HCT116 (cell line): ENCODE measurements at regions of chr1 and their contacts with region 1.

Region 1: DNA sequence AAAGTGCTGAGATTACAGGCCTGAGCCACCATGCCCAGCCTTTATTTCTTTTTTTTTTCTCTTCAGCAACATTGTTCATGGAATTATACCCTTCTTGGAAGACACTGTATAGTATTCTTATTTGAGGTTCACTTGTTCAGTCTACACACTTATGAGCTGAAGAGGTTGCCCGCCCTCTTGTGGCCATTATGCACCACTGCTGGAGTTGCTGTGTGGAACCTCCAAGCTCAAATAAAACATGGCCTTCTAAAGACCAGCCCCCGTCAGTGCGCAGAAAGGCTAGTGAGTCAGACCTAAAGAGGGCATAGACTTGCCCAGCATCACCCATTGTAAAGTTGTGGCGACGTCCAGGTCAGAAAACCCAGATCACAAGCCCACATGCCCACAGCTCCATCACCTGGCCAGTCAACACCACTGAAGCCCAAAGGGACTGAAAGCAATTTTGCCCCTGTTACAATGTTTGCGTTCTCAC is 20.4 kb downstream of the LURAP1 start:
- DNase-seq: peak; percentile 87
- ATAC-seq: peak; percentile 95
- H3K4me3 ChIP-seq: no peak overlapping the region; a peak in 1 of 4 replicates
- H3K27ac ChIP-seq: peak overlapping the region; percentile 6; the same call in 1 of the 2 replicates
- H3K4me1 ChIP-seq: peaks cover 3 to 27% of the 10 kb centered on the region in 2 experiments; a peak in 3 of 4 replicates
- H3K27me3 ChIP-seq: no peaks in the 10 kb centered on the region
- CTCF ChIP-seq: peak; percentile 92 to 99 (median 98)
- POLR2A ChIP-seq: no peak
- RAD21 ChIP-seq: peak; percentile 98

Region 2: DNA sequence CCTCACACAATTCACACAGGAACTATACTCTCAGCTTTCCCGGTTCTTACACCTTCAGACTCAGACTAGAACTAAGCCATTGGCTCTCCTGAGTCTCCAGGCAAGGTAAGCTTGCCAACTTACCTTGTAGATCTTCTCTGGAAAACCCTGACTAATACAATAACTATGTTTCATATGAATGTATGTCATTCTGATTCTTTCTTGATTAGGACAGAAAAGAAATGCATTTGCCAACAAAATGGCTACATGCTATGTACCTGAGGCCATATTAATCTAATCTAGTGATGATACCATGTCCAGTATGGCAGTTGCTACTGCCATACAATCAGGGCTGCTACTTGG is 1007.3 kb before region 1 on chr1:
- CTCF ChIA-PET with region 1: no interaction called
- POLR2A ChIA-PET with region 1: no interaction called
- RAD21 ChIA-PET with region 1: no interaction called
- intact Hi-C with region 1: no loop called
- DNase-seq: no peak
- ATAC-seq: no peak
- H3K4me3 ChIP-seq: no peak overlapping the region
- H3K27ac ChIP-seq: no peak overlapping the region
- H3K4me1 ChIP-seq: no peaks in the 10 kb centered on the region
- H3K27me3 ChIP-seq: no peaks in the 10 kb centered on the region
- CTCF ChIP-seq: no peak
- POLR2A ChIP-seq: no peak
- RAD21 ChIP-seq: no peak

Region 3: GRCh38 chr1:46026531-46026930 is 197.0 kb before region 1 on chr1:
- CTCF ChIA-PET with region 1: no interaction called
- POLR2A ChIA-PET with region 1: no interaction called
- RAD21 ChIA-PET with region 1: no interaction called
- intact Hi-C with region 1: no loop called
- DNase-seq: no peak
- ATAC-seq: no peak
- H3K4me3 ChIP-seq: no peak overlapping the region
- H3K27ac ChIP-seq: no peak overlapping the region
- H3K4me1 ChIP-seq: no peaks in the 10 kb centered on the region
- H3K27me3 ChIP-seq: no peaks in the 10 kb centered on the region
- CTCF ChIP-seq: no peak
- POLR2A ChIP-seq: no peak
- RAD21 ChIP-seq: no peak

Region 4: GRCh38 chr1:46036894-46037839 is 186.3 kb before region 1 on chr1:
- CTCF ChIA-PET with region 1: interaction called, 36 read pairs
- POLR2A ChIA-PET with region 1: interaction called, 3 read pairs
- RAD21 ChIA-PET with region 1: interaction called in 1 of 2 experiments, 3 read pairs
- intact Hi-C with region 1: loop called (anchors 1 kb)
- DNase-seq: peak; percentile 63
- ATAC-seq: peak; percentile 85
- H3K4me3 ChIP-seq: no peak overlapping the region
- H3K27ac ChIP-seq: no peak overlapping the region
- H3K4me1 ChIP-seq: peaks cover 7 to 11% of the 10 kb centered on the region in 2 experiments; a peak in 3 of 4 replicates
- H3K27me3 ChIP-seq: no peaks in the 10 kb centered on the region
- CTCF ChIP-seq: peak; percentile 96 to 98 (median 96)
- POLR2A ChIP-seq: no peak
- RAD21 ChIP-seq: peak; percentile 100

Region 5: GRCh38 chr1:46043458-46044017 is 180.0 kb before region 1 on chr1:
- CTCF ChIA-PET with region 1: interaction called, 10 read pairs
- POLR2A ChIA-PET with region 1: interaction called, 3 read pairs
- RAD21 ChIA-PET with region 1: interaction called in 1 of 2 experiments, 3 read pairs
- intact Hi-C with region 1: no loop called
- DNase-seq: no peak
- ATAC-seq: no peak
- H3K4me3 ChIP-seq: no peak overlapping the region
- H3K27ac ChIP-seq: no peak overlapping the region
- H3K4me1 ChIP-seq: peaks cover 7 to 11% of the 10 kb centered on the region in 2 experiments; a peak in 3 of 4 replicates
- H3K27me3 ChIP-seq: no peaks in the 10 kb centered on the region
- CTCF ChIP-seq: no peak
- POLR2A ChIP-seq: no peak
- RAD21 ChIP-seq: no peak

Region 6: DNA sequence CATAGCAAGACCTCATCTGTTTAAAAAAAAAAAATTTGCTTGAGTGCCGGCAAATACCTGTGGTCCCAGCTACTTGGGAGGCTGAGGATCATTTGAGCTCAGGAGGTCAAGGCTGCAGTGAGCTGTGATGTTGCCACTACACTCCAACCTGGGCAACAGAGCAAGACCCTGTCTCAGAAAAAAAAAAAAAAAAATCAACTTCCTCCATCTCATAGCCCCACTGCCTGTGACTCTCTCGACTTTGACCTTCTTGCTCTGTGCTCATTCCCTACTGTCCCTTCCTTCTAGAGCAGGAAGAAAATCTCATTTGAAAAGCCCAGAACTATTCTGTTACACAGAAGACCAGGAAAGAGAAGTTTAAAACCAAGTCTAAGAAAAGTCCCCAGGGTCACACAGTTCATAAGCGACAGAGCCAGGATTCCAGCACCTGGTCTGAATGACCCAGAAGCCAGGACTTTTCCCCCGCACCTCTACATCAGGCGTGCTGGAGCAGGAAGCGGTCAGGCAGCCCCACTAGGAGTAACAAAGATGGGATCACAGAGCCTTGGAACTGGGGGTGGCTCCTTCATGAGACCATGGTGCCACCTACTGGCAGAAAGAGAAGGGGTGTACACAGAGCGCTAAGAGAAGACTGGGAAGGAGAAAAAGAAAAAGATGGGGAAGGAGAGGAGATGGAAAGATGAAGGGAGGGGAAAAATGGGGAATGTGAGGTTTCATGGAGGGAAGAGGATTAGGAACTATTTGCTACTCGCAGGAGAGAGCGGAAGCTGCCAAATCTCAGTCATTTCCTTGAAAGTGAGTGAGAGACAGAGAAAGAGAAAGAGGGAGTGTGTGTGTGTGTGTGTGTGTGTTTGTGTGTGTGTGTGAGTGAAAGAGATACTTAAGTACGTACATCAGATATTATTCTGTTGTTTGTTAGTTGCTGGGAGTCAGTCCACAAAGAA is 44.1 kb before region 1 on chr1:
- CTCF ChIA-PET with region 1: interaction called, 94 read pairs
- POLR2A ChIA-PET with region 1: interaction called, 17 read pairs
- RAD21 ChIA-PET with region 1: interaction called, 12 to 28 read pairs
- intact Hi-C with region 1: loop called (anchors 1 kb)
- DNase-seq: peak; percentile 80
- ATAC-seq: peak; percentile 69
- H3K4me3 ChIP-seq: peak overlapping the region; percentile 5; a peak in 1 of 4 replicates
- H3K27ac ChIP-seq: no peak overlapping the region; the same call in 1 of the 2 replicates
- H3K4me1 ChIP-seq: peaks cover 55 to 63% of the 10 kb centered on the region in 2 experiments
- H3K27me3 ChIP-seq: no peaks in the 10 kb centered on the region
- CTCF ChIP-seq: peak in 2 of 3 experiments; percentile 96 to 98; a peak in 4 of 6 replicates
- POLR2A ChIP-seq: no peak
- RAD21 ChIP-seq: no peak

Region 7: GRCh38 chr1:46203738-46204405 is 19.6 kb before region 1 on chr1:
- CTCF ChIA-PET with region 1: interaction called, 10 read pairs
- POLR2A ChIA-PET with region 1: interaction called, 7 read pairs
- RAD21 ChIA-PET with region 1: no interaction called
- intact Hi-C with region 1: no loop called
- DNase-seq: no peak
- ATAC-seq: no peak
- H3K4me3 ChIP-seq: no peak overlapping the region
- H3K27ac ChIP-seq: no peak overlapping the region
- H3K4me1 ChIP-seq: peaks cover 3 to 16% of the 10 kb centered on the region in 2 experiments; a peak in 3 of 4 replicates
- H3K27me3 ChIP-seq: no peaks in the 10 kb centered on the region
- CTCF ChIP-seq: no peak
- POLR2A ChIP-seq: no peak
- RAD21 ChIP-seq: no peak

Region 8: GRCh38 chr1:46236882-46237281 is 13.4 kb after region 1 on chr1:
- CTCF ChIA-PET with region 1: interaction called, 15 read pairs
- POLR2A ChIA-PET with region 1: interaction called, 5 read pairs
- RAD21 ChIA-PET with region 1: interaction called in 1 of 2 experiments, 3 read pairs
- intact Hi-C with region 1: no loop called
- DNase-seq: no peak
- ATAC-seq: no peak
- H3K4me3 ChIP-seq: no peak overlapping the region
- H3K27ac ChIP-seq: no peak overlapping the region
- H3K4me1 ChIP-seq: no peaks in the 10 kb centered on the region
- H3K27me3 ChIP-seq: no peaks in the 10 kb centered on the region
- CTCF ChIP-seq: no peak
- POLR2A ChIP-seq: no peak
- RAD21 ChIP-seq: no peak

Region 9: GRCh38 chr1:46247436-46248121 is 24.1 kb after region 1 on chr1 and contains the start of gene RAD54L:
- CTCF ChIA-PET with region 1: interaction called, 48 read pairs
- POLR2A ChIA-PET with region 1: interaction called, 6 read pairs
- RAD21 ChIA-PET with region 1: interaction called, 3 to 5 read pairs
- intact Hi-C with region 1: no loop called
- DNase-seq: peak; percentile 98
- ATAC-seq: peak; percentile 90
- H3K4me3 ChIP-seq: peak within 1 kb of the TSS; percentile 55 to 73
- H3K27ac ChIP-seq: peak within 1 kb of the TSS; percentile 78
- H3K4me1 ChIP-seq: peaks cover 16 to 31% of the 10 kb centered on the region in 2 experiments
- H3K27me3 ChIP-seq: no peaks in the 10 kb centered on the region
- CTCF ChIP-seq: no peak
- POLR2A ChIP-seq: peak; percentile 41
- RAD21 ChIP-seq: no peak
- total RNA-seq, gene RAD54L: 28.9 TPM